Activated CD4-positive, alpha-beta T cell treated with anti-CD3 and anti-CD28 coated beads for 36 hours (primary cell): ENCODE measurements at regions of chr12 and their contacts with region 1.

Region 1: GRCh38 chr12:21677622-21678277 is 20.1 kb upstream of the LDHB start:
- DNase-seq: peak; percentile 30
- ATAC-seq: peak; percentile 31
- H3K4me3 Mint-ChIP-seq: peak overlapping the region; percentile 2
- H3K27ac Mint-ChIP-seq: peak overlapping the region; percentile 72
- H3K4me1 Mint-ChIP-seq: peaks cover 51% of the 10 kb centered on the region
- H3K27me3 Mint-ChIP-seq: no peaks in the 10 kb centered on the region

Region 2: DNA sequence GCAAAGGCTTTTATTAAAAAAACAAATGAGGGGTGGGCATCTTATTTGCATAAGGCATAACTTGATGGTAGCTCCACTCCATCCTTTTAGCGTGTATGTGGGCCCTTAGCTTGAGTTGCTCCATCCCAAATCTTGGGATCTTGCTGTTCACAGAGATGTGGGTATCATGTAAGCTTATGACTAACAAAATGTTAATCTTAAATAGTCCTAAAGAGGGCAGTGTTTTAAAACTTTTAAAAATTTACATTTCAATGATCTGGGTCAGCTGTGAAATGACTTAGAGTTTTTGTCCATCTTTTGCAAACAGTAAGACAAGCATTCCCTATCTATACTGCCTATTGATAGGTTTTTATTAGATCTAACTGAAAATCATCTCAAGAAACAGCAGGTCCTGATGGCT is 429.1 kb before region 1 on chr12:
- CTCF ChIA-PET with region 1: no interaction called
- POLR2A ChIA-PET with region 1: no interaction called
- intact Hi-C with region 1: loop called (anchors 1 to 2 kb)
- DNase-seq: no peak
- ATAC-seq: no peak
- H3K4me3 Mint-ChIP-seq: no peak overlapping the region
- H3K27ac Mint-ChIP-seq: no peak overlapping the region
- H3K4me1 Mint-ChIP-seq: no peaks in the 10 kb centered on the region
- H3K27me3 Mint-ChIP-seq: no peaks in the 10 kb centered on the region

Region 3: DNA sequence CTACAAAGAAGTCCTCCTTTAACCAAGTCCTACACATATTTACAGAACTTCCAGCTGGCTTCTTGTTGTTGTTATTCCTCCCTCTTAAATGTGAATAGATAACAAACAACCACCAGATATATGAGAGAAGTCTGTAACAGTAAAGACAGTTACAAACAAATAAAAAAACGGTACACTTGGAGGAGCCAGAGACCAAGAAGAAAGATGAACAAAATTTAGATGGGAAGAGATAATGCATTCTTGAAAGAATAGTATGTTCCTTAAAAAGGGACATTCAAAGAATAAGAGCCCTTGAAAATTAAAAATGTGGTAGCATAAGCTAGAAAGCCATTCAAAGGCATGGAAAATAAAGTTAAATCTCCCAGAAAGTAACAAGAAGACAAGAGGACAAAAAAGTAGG is 369.0 kb before region 1 on chr12:
- CTCF ChIA-PET with region 1: interaction called, 6 read pairs
- POLR2A ChIA-PET with region 1: no interaction called
- intact Hi-C with region 1: loop called (anchors 1 to 5 kb)
- DNase-seq: no peak
- ATAC-seq: no peak
- H3K4me3 Mint-ChIP-seq: no peak overlapping the region
- H3K27ac Mint-ChIP-seq: no peak overlapping the region
- H3K4me1 Mint-ChIP-seq: no peaks in the 10 kb centered on the region
- H3K27me3 Mint-ChIP-seq: peaks cover 5% of the 10 kb centered on the region

Region 4: GRCh38 chr12:21607701-21608100 is 70.0 kb before region 1 on chr12:
- CTCF ChIA-PET with region 1: interaction called, 15 read pairs
- POLR2A ChIA-PET with region 1: no interaction called
- intact Hi-C with region 1: loop called (anchors 1 to 2 kb)
- DNase-seq: no peak
- ATAC-seq: peak; percentile 51
- H3K4me3 Mint-ChIP-seq: no peak overlapping the region
- H3K27ac Mint-ChIP-seq: no peak overlapping the region
- H3K4me1 Mint-ChIP-seq: peaks cover 6% of the 10 kb centered on the region
- H3K27me3 Mint-ChIP-seq: no peaks in the 10 kb centered on the region

Region 5: DNA sequence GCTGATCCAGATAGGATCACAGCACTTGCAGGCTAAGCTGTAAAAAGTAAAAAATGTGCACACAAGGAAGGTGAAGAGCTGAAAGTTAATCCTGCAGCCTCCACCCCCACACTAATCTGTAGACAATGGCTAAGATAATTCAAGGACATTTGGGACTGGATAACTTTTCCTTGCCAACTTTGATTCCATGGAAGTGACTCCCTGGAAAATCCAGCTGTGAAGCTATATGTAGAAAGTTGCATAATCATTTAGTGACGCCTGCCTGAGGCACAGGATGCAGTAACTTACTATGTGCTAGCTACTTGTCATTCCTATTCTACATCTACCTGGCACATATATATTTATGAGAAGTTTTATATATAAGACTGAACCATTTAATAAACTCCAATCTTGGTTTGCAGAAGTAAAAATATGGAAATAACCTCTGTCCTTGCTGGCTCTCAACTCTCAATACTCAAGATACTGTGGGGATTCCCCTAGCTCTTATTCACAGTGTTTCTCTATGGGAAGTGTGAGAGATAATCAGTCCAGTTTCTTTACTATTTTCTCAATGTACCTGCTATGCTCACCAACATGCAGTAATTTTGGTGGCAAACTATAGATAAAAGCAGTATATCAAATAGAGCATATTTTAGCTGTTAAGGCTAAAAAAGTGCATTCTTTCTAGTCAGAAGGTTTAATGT is 34.9 kb before region 1 on chr12:
- CTCF ChIA-PET with region 1: interaction called, 11 read pairs
- POLR2A ChIA-PET with region 1: interaction called, 3 read pairs
- intact Hi-C with region 1: loop called in 1 of 2 experiments (anchors 5 kb)
- DNase-seq: no peak
- ATAC-seq: peak; percentile 90
- H3K4me3 Mint-ChIP-seq: no peak overlapping the region
- H3K27ac Mint-ChIP-seq: peak overlapping the region; percentile 91
- H3K4me1 Mint-ChIP-seq: peaks cover 83% of the 10 kb centered on the region
- H3K27me3 Mint-ChIP-seq: no peaks in the 10 kb centered on the region

Region 6: GRCh38 chr12:21657326-21658077 is 20.2 kb before region 1 on chr12 and contains the start of gene LDHB:
- CTCF ChIA-PET with region 1: interaction called, 19 read pairs
- POLR2A ChIA-PET with region 1: interaction called, 8 read pairs
- intact Hi-C with region 1: loop called (anchors 1 kb)
- DNase-seq: peak; percentile 97
- ATAC-seq: peak; percentile 97
- H3K4me3 Mint-ChIP-seq: peak within 1 kb of the TSS; percentile 81
- H3K27ac Mint-ChIP-seq: peak within 1 kb of the TSS; percentile 99
- H3K4me1 Mint-ChIP-seq: peaks cover 45% of the 10 kb centered on the region
- H3K27me3 Mint-ChIP-seq: no peaks in the 10 kb centered on the region
- total RNA-seq, gene LDHB: 918 to 1,852 TPM

Region 7: DNA sequence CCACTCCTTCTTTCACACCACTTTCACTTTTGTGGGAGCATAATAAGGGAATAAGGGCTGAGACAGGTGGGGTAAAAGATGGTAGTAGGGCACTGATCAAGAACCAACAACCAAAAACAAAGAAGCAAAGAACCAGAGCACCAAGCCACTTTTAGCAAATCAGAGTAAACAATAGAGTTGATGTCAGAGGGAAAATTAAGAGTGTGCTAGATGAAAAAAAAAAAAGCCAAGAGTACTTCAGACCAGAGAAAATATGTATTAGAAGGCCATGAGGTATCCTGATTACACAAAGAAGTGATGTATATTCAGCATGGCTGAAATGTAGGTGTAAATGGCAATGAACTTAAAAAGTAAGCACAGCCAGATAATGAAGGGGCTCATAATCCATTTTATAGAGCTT is 188.1 kb after region 1 on chr12:
- CTCF ChIA-PET with region 1: no interaction called
- POLR2A ChIA-PET with region 1: no interaction called
- intact Hi-C with region 1: no loop called
- DNase-seq: no peak
- ATAC-seq: no peak
- H3K4me3 Mint-ChIP-seq: no peak overlapping the region
- H3K27ac Mint-ChIP-seq: no peak overlapping the region
- H3K4me1 Mint-ChIP-seq: no peaks in the 10 kb centered on the region
- H3K27me3 Mint-ChIP-seq: peaks cover 8% of the 10 kb centered on the region

Region 8: DNA sequence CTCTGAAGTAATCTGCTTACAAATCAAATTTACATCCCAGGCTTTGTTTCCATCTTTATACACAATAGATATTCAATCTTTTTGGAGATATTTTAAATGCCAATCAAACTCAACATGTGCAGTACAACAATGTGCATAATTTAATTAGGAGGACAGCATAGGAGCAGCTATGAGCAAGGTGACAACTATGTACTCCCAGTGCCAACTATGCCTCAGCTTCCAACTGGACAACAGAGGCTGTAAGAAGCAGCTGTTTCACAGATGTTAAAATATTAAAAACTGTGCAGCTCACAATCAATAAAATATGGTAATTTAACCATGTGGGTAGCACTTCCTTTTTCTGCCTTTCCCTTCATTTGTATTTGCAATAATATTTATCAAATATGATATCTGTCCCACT is 556.8 kb after region 1 on chr12:
- CTCF ChIA-PET with region 1: no interaction called
- POLR2A ChIA-PET with region 1: no interaction called
- intact Hi-C with region 1: no loop called
- DNase-seq: no peak
- ATAC-seq: no peak
- H3K4me3 Mint-ChIP-seq: no peak overlapping the region
- H3K27ac Mint-ChIP-seq: no peak overlapping the region
- H3K4me1 Mint-ChIP-seq: no peaks in the 10 kb centered on the region
- H3K27me3 Mint-ChIP-seq: no peaks in the 10 kb centered on the region